ENCODE measurements at regions of chr10 and their contacts with region 1.

Region 1: GRCh38 chr10:119608316-119609155 is 11.8 kb upstream of the TIAL1 start:
- DNase-seq: peak; percentile 42
- H3K4me3 ChIP-seq: no peak overlapping the region
- H3K27ac ChIP-seq: no peak overlapping the region
- H3K4me1 ChIP-seq: no peaks in the 10 kb centered on the region
- H3K27me3 ChIP-seq: no peaks in the 10 kb centered on the region
- CTCF ChIP-seq: peak; percentile 66 to 68
- POLR2A ChIP-seq: no peak

Region 2: GRCh38 chr10:119634219-119634544 is 25.6 kb after region 1 on chr10:
- CTCF ChIA-PET with region 1: interaction called, 9 read pairs
- POLR2A ChIA-PET with region 1: no interaction called
- dilution Hi-C with region 1: no loop called
- intact Hi-C with region 1: loop called (anchors 2 kb)
- DNase-seq: no peak
- H3K4me3 ChIP-seq: no peak overlapping the region
- H3K27ac ChIP-seq: no peak overlapping the region
- H3K4me1 ChIP-seq: no peaks in the 10 kb centered on the region
- H3K27me3 ChIP-seq: peaks cover 0 to 1% of the 10 kb centered on the region in 2 experiments
- CTCF ChIP-seq: no peak
- POLR2A ChIP-seq: no peak

Region 3: DNA sequence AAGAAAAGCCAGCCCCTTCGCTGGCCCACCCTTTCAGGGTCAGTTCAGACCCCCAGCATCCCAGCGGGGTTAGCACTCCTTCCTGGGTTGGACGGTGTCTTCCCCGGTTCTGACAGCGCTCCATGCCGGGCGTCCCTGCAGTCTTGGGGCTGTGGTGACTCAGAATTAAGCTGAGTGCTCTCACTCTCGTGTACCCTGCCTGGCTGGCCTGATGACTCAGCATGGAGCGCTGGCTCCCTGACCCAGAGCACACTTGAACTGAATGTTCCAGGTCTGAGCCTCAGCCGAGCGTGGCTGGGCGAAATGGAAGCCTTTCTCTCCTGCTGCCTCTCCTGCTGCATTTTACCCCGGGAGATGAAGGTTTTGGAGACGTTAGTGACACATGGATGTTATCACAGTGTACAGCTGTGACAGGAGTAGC is 49.7 kb after region 1 on chr10:
- CTCF ChIA-PET with region 1: interaction called, 21 read pairs
- POLR2A ChIA-PET with region 1: no interaction called
- dilution Hi-C with region 1: no loop called
- intact Hi-C with region 1: no loop called
- DNase-seq: peak; percentile 90
- H3K4me3 ChIP-seq: no peak overlapping the region
- H3K27ac ChIP-seq: peak overlapping the region; percentile 78
- H3K4me1 ChIP-seq: peaks cover 49% of the 10 kb centered on the region
- H3K27me3 ChIP-seq: no peaks in the 10 kb centered on the region
- CTCF ChIP-seq: no peak
- POLR2A ChIP-seq: no peak

Region 4: DNA sequence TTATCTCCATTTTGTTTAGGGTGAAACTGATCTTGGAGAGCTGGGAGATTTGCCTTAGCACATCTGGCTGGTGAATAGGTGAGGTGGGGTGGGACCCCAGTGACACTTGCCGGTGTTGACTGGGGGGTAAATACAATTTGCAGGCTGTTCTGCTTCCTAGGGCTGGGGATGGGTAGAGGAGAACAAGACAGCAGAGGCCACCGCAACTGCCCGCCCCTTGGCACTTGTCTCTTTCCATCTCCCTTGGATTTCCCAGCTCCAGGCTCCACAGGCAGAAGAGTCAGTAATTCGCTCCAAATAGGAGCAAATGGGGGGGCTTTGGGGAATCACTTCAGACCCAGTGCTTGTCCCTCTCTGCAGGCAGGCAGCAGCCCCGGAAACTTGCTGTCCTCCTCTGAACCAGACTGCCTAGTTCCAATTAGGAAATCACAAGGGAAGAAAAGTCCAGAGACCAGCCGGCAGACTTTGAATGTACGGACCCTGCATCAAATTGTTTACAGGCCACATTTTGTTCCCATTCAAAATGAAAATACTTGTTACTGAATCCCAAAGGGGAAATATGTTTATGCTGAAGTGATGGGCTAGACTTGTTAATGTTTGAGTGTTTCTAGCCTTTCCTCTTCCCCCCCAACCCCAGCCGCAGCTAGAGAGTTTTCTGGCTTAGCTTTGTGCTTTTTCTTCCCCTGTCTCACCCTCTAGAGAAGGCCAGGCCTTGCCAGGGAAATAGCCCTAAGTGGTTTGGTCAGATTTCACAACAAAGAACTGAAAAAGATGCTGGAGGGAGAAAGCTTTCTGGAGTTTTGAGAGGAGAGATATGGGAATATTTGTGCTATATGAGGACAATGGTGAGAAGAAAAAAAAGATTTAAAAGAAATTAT is 107.3 kb after region 1 on chr10:
- CTCF ChIA-PET with region 1: no interaction called
- POLR2A ChIA-PET with region 1: no interaction called
- dilution Hi-C with region 1: no loop called
- intact Hi-C with region 1: no loop called
- DNase-seq: no peak
- H3K4me3 ChIP-seq: no peak overlapping the region
- H3K27ac ChIP-seq: no peak overlapping the region
- H3K4me1 ChIP-seq: no peaks in the 10 kb centered on the region
- H3K27me3 ChIP-seq: no peaks in the 10 kb centered on the region
- CTCF ChIP-seq: no peak
- POLR2A ChIP-seq: no peak